ENCODE measurements at regions of chr10 and their contacts with region 1.

Region 1: GRCh38 chr10:59479426-59479825 is 117.1 kb upstream of the FAM13C start:
- DNase-seq: no peak

Region 2: GRCh38 chr10:60186315-60187071 is 707.1 kb after region 1 on chr10:
- intact Hi-C with region 1: loop called in 1 of 2 experiments (anchors 5 kb)
- DNase-seq: no peak

Measured in posterior vena cava (tissue), 2 donors.